ENCODE measurements at regions of chr16 and their contacts with region 1.

Region 1: GRCh38 chr16:29862884-29863668 is at the start of gene CDIPT:
- DNase-seq: peak; percentile 95 to 98 (median 96)
- ATAC-seq: peak; percentile 97 to 98
- H3K4me3 ChIP-seq: peak within 1 kb of the TSS; percentile 90
- H3K27ac ChIP-seq: peak within 1 kb of the TSS; percentile 89
- H3K4me1 ChIP-seq: peaks cover 7% of the 10 kb centered on the region
- H3K27me3 ChIP-seq: no peaks in the 10 kb centered on the region
- total RNA-seq, gene CDIPT: 86.7 to 109 (median 99.1) TPM

Region 2: GRCh38 chr16:28937222-28937876 is 925.7 kb before region 1 on chr16:
- intact Hi-C with region 1: no loop called
- DNase-seq: no peak
- ATAC-seq: no peak
- H3K4me3 ChIP-seq: no peak overlapping the region
- H3K27ac ChIP-seq: no peak overlapping the region
- H3K4me1 ChIP-seq: no peaks in the 10 kb centered on the region
- H3K27me3 ChIP-seq: no peaks in the 10 kb centered on the region

Region 3: GRCh38 chr16:29694384-29695195 is 168.5 kb before region 1 on chr16:
- intact Hi-C with region 1: no loop called
- DNase-seq: peak; percentile 39 to 74 (median 61)
- ATAC-seq: peak; percentile 48 to 58
- H3K4me3 ChIP-seq: no peak overlapping the region
- H3K27ac ChIP-seq: no peak overlapping the region
- H3K4me1 ChIP-seq: no peaks in the 10 kb centered on the region
- H3K27me3 ChIP-seq: no peaks in the 10 kb centered on the region

Region 4: GRCh38 chr16:29815793-29816693 is 47.0 kb before region 1 on chr16 and contains the start of gene PAGR1:
- intact Hi-C with region 1: no loop called
- DNase-seq: peak; percentile 99
- ATAC-seq: peak; percentile 86 to 87
- H3K4me3 ChIP-seq: peak within 1 kb of the TSS; percentile 62
- H3K27ac ChIP-seq: peak within 1 kb of the TSS; percentile 98
- H3K4me1 ChIP-seq: peaks cover 2% of the 10 kb centered on the region
- H3K27me3 ChIP-seq: no peaks in the 10 kb centered on the region
- total RNA-seq, gene PAGR1: 13.7 to 20.3 (median 15.2) TPM

Region 5: DNA sequence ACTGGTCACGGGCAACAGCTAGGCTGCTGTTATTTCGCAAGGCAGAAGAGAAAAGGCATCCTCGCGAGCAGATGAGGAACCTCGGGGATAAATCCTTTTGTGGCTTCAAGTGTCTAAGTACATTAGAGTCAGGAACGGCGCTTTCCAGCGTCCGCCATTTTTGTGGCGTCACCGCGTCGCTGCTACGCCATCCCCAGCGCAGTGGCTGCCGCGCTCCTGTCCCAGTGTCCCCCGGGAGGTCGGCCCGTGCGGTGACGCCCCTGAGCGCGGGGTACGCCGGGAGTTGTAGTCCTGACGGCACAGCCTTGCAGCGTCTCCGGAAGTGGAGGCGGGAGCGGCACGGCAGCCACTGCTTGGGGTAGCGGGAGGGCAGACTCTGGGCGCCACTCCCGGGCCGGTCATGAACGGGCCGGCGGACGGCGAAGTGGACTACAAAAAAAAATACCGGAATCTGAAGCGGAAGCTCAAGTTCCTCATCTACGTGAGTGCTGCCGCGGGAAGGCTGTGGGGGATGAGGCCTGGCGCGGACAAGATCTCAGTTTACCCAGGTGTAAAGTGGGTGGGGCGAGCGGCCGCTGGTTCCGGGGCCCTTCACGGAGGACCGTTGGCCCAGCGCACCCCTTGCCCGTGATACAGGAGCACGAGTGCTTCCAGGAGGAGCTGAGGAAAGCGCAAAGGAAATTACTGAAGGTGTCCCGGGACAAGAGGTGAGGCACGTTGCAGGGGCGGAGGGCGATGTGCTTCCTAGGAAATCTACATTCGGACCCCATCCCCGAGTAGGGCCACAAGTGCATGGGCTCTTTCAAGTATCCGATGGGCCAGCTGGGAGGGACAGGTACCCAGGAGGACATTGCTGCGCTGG is 133.1 kb after region 1 on chr16 and contains the start of gene INO80E:
- intact Hi-C with region 1: loop called in 1 of 4 experiments (anchors 10 kb)
- DNase-seq: peak; percentile 99 to 100 (median 100)
- ATAC-seq: peak; percentile 98 to 99
- H3K4me3 ChIP-seq: peak within 1 kb of the TSS; percentile 73
- H3K27ac ChIP-seq: peak within 1 kb of the TSS; percentile 92
- H3K4me1 ChIP-seq: peaks cover 7% of the 10 kb centered on the region
- H3K27me3 ChIP-seq: no peaks in the 10 kb centered on the region
- total RNA-seq, gene INO80E: 32.7 to 44.6 (median 37.1) TPM

Region 6: DNA sequence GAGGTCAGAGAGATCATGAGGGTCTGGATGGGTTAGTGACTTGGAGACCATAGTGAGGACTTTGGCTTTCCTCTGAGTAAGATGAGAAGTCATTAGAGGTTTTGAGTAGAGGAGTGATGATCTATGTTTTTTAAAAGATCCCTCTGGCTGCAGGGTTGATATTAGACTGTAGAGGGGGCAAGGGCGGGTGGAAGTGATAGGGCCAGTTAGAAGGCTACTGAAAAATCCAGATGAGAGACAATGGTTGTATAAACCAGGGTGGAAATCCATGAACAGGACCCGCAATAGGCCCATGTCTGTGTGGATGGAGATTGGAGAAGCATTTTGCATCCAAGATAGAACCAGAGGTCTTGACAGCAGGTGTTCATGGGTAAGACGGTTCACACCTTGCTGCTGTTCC is 619.3 kb after region 1 on chr16:
- intact Hi-C with region 1: no loop called
- DNase-seq: no peak
- ATAC-seq: no peak
- H3K4me3 ChIP-seq: no peak overlapping the region
- H3K27ac ChIP-seq: no peak overlapping the region
- H3K4me1 ChIP-seq: no peaks in the 10 kb centered on the region
- H3K27me3 ChIP-seq: no peaks in the 10 kb centered on the region

Measured in right cardiac atrium (tissue), 5 donors.